ENCODE measurements at regions of chr1 and their contacts with region 1.

Region 1: DNA sequence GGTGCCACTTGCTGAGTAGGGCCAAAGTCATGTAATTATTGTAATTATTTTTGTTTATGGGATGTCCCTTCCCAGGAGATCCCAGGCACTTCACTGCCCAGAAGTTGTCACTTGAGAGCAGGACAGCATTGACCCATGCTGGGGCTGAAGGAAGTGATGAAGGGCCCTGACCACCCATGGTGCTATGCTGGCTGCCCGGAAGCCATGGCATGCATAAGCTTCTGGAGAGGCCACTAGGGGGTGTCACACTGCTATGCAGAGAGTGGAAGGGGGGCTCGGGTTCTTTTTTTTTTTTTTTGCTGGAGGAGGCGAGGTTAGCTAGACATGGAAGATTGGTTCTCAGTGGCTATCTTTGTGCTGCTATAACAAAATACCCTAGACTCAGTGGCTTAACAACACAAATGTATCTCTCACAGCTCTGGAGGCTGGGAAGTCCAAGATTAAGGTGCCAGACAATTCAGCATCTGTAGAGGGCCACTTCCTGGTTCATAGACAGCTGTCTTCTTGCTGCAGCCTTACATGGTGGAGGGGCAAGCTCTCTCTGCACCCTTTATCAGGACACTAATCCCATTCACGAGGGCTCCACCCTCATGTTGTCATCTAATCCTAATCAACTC is 84.9 kb downstream of the CNIH3 start:
- DNase-seq: peak in 1 of 2 experiments; percentile 8
- H3K4me3 ChIP-seq: no peak overlapping the region
- H3K4me3 Mint-ChIP-seq: no peak overlapping the region
- H3K27ac Mint-ChIP-seq: no peak overlapping the region
- H3K4me1 ChIP-seq: no peaks in the 10 kb centered on the region
- H3K4me1 Mint-ChIP-seq: no peaks in the 10 kb centered on the region
- H3K27me3 ChIP-seq: no peaks in the 10 kb centered on the region
- H3K27me3 Mint-ChIP-seq: peaks cover 3% of the 10 kb centered on the region
- CTCF ChIP-seq: peak in 1 of 2 experiments; percentile 26

Region 2: DNA sequence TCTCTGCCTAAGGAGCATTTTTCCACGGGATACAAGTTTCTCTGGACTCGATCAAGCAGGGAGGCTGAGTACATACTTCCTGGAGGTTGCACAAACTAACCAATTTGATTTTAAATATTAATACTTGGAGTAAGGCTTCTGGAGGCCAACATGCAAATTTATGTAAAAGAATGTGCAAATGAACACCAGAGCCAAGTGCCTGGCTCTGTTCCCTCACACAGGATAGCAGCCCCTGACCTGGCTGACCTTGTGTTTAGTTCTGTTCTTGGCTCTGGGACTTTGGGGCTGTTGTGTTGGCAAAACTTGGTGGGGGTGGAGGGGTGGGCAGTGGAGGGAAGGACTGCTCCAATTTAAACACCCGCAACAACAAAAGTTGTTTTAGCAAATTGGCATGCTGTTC is 50.7 kb before region 1 on chr1:
- CTCF ChIA-PET with region 1: interaction called, 10 read pairs
- POLR2A ChIA-PET with region 1: no interaction called
- intact Hi-C with region 1: no loop called
- DNase-seq: no peak
- H3K4me3 ChIP-seq: no peak overlapping the region
- H3K4me3 Mint-ChIP-seq: no peak overlapping the region
- H3K27ac Mint-ChIP-seq: no peak overlapping the region
- H3K4me1 ChIP-seq: no peaks in the 10 kb centered on the region
- H3K4me1 Mint-ChIP-seq: no peaks in the 10 kb centered on the region
- H3K27me3 ChIP-seq: no peaks in the 10 kb centered on the region
- H3K27me3 Mint-ChIP-seq: no peaks in the 10 kb centered on the region
- CTCF ChIP-seq: no peak

Measured in Caco-2 (cell line).